ENCODE measurements at regions of chr3 and their contacts with region 1.

Region 1: DNA sequence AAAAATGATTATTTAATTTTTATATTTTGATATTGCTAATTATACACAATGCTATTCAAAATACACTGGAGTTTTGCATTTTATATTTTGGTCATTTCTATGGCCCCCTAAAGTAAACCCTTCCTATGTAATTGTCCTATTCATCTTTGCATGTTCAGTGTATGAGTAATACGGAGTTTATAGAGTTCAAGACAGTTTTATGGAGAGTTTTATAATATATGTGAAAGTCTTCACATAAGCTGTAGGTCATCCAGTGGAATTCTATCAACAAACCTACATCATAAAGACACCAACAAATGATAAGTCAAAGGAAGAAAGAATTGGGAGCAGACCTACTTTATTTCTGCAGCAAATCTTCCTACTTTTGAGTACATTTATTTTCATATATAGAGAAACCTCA is 1200.4 kb upstream of the EPHA6 start:
- DNase-seq: no peak
- H3K4me3 ChIP-seq: no peak overlapping the region
- H3K27ac ChIP-seq: no peak overlapping the region
- H3K4me1 ChIP-seq: no peaks in the 10 kb centered on the region
- H3K27me3 ChIP-seq: no peaks in the 10 kb centered on the region
- CTCF ChIP-seq: no peak

Region 2: DNA sequence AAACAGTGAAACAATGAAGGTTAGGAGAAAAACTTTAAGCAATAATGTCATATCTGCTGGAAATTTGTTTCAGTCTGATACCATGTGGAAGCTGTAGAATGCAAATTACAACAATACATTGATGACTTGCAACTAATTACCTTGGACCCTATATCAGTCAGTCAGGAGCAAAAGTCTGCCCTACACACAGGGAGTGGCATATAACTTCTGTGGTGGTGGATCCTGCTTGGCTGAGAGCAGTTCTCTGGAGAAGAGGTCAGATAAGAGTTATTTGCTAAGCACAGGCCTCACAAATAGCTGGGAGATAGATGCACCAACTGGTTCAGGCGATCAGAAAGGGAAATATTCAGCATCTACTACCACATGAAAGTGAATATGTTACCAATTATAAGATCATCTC is 164.2 kb before region 1 on chr3:
- intact Hi-C with region 1: loop called (anchors 5 kb)
- DNase-seq: no peak
- H3K4me3 ChIP-seq: no peak overlapping the region
- H3K27ac ChIP-seq: no peak overlapping the region
- H3K4me1 ChIP-seq: no peaks in the 10 kb centered on the region
- H3K27me3 ChIP-seq: no peaks in the 10 kb centered on the region
- CTCF ChIP-seq: no peak

Measured in ascending aorta (tissue), 2 donors.